ENCODE measurements at regions of chr5 and their contacts with region 1.

Region 1: DNA sequence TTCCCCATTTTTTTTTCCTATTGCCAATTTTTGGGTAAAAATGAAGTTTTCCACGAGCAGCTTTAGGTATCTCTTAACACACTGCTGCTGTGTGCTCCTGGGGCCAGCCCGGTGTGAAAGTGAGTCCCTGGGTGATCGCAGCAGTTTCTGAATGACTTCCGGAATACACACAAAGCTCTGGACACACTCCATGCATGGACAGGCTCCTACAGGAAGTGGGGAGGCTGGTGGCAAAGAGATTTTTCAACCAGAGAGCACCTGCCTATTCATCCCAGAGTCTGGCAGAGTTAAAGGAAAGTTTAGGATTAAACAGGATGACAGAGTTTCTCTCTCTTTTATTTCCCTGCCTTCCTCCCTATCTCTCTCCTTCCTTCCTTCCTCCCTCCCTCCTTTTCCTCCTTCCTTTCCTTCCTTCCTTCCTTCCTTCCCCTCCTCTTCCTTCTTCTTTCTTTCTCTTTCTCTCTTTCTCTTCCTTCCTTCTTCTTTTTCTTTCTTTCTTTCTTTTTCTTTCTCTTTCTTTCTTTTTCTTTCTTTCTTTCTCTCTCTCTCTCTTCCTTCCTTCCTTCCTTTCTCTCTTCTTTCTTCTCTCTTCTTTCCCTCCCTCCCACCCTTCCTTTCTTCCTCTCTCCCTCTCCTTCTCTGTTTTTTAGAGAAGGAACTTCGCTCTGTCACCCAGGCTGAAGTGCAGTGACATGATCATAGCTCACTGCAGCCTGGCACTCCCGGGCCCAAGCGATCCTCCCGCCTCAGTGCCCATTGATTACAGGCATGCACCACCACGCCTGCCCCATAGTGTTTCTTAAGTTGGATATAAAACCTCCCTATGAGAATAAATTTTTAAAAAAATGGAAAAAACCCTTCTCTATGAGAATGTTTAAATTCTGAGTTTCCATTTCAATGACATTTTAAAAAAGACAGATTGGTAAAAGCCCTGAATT is 38.7 kb upstream of the UBTD2 start:
- DNase-seq: peak; percentile 15
- ATAC-seq: peak; percentile 82
- H3K4me3 ChIP-seq: peak overlapping the region in 1 of 3 experiments; percentile 15; a peak in 1 of 6 replicates
- H3K27ac ChIP-seq: no peak overlapping the region
- H3K4me1 ChIP-seq: 0 out of 2 replicates have a peak, but pooled peaks cover 8% of the 10 kb centered on the region
- H3K27me3 ChIP-seq: no peaks in the 10 kb centered on the region
- CTCF ChIP-seq: no peak
- EP300 ChIP-seq: no peak
- POLR2A ChIP-seq: no peak
- RAD21 ChIP-seq: no peak

Region 2: GRCh38 chr5:172688349-172689217 is 366.3 kb after region 1 on chr5:
- CTCF ChIA-PET with region 1: no interaction called
- POLR2A ChIA-PET with region 1: no interaction called
- in situ Hi-C with region 1: no loop called
- intact Hi-C with region 1: loop called (anchors 10 kb)
- DNase-seq: no peak
- ATAC-seq: peak; percentile 46; the same call in 2 of the 3 replicates
- H3K4me3 ChIP-seq: no peak overlapping the region
- H3K27ac ChIP-seq: no peak overlapping the region
- H3K4me1 ChIP-seq: peaks cover 27% of the 10 kb centered on the region
- H3K27me3 ChIP-seq: peaks cover 0 to 31% of the 10 kb centered on the region in 2 experiments; a peak in 3 of 5 replicates
- CTCF ChIP-seq: no peak
- EP300 ChIP-seq: no peak
- POLR2A ChIP-seq: no peak
- RAD21 ChIP-seq: no peak

Measured in HepG2 (cell line).